Heart right ventricle (tissue), 16 donors: ENCODE measurements at regions of chr4 and their contacts with region 1.

Region 1: GRCh38 chr4:169485791-169486742 is 126.3 kb downstream of the NEK1 start:
- DNase-seq: peak in 1 of 2 donors; percentile 23
- ATAC-seq: peak in 4 of 8 donors; percentile 59 to 65 (median 62)
- H3K4me3 ChIP-seq: peak overlapping the region in 1 of 10 donors; percentile 20
- H3K27ac ChIP-seq: no peak overlapping the region
- H3K4me1 ChIP-seq: peaks cover 0 to 5% (median 0%) of the 10 kb centered on the region in 9 donors
- H3K27me3 ChIP-seq: no peaks in the 10 kb centered on the region
- CTCF ChIP-seq: peak in 8 of 9 donors; percentile 35 to 75 (median 65)

Region 2: GRCh38 chr4:168995537-168996295 is 490.4 kb before region 1 on chr4:
- intact Hi-C with region 1: loop called in 1 of 10 experiments (anchors 10 kb)
- DNase-seq: no peak
- ATAC-seq: peak in 7 of 8 donors; percentile 59 to 76 (median 70)
- H3K4me3 ChIP-seq: no peak overlapping the region
- H3K27ac ChIP-seq: no peak overlapping the region
- H3K4me1 ChIP-seq: peaks cover 0 to 38% (median 18%) of the 10 kb centered on the region in 9 donors
- H3K27me3 ChIP-seq: no peaks in the 10 kb centered on the region
- CTCF ChIP-seq: peak in 8 of 9 donors; percentile 8 to 52 (median 36)

Region 3: GRCh38 chr4:169128902-169129301 is 357.2 kb before region 1 on chr4:
- intact Hi-C with region 1: loop called in 1 of 10 experiments (anchors 10 kb)
- DNase-seq: no peak
- ATAC-seq: no peak
- H3K4me3 ChIP-seq: no peak overlapping the region
- H3K27ac ChIP-seq: no peak overlapping the region
- H3K4me1 ChIP-seq: peaks cover 0 to 8% (median 0%) of the 10 kb centered on the region in 9 donors
- H3K27me3 ChIP-seq: no peaks in the 10 kb centered on the region
- CTCF ChIP-seq: no peak

Region 4: GRCh38 chr4:169311643-169312365 is 174.3 kb before region 1 on chr4:
- intact Hi-C with region 1: loop called in 1 of 10 experiments (anchors 10 kb)
- DNase-seq: peak in 1 of 2 donors; percentile 55
- ATAC-seq: peak; percentile 60 to 87 (median 78)
- H3K4me3 ChIP-seq: no peak overlapping the region
- H3K27ac ChIP-seq: no peak overlapping the region
- H3K4me1 ChIP-seq: peaks cover 8 to 23% (median 19%) of the 10 kb centered on the region in 9 donors
- H3K27me3 ChIP-seq: no peaks in the 10 kb centered on the region
- CTCF ChIP-seq: peak; percentile 43 to 72 (median 66)